ENCODE measurements at regions of chr16 and their contacts with region 1.

Region 1: DNA sequence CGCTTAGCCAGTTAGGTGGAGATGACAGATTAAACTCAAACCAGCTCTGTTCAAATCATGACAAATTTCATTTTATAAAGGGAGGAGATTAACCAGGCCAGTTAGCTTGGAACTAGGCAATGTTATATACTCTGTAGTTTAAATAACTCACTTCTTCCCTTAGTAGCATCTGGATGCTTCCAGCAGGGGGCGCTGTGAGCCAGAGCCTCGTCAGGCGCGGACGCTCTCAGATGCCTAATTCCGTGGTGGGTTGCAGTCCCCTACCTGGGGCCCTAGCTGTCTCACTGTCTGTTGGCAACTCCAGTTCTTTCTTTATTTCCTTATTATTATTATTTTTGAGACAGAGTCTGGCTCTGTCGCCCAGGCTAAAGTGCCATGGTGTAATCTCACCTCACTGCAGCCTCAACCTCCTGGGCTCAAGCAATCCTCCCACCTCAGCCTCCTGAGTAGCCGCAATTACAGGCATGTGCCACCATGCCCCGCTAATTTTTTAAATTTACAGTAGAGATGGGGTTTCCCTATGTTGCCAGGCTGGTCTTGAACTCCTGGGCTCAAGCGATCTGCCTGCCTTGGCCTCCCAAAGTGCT is 17.3 kb upstream of the WFDC1 start:
- DNase-seq: peak; percentile 51
- ATAC-seq: peak; percentile 85
- H3K4me3 ChIP-seq: no peak overlapping the region
- H3K27ac ChIP-seq: no peak overlapping the region
- H3K4me1 ChIP-seq: no peaks in the 10 kb centered on the region
- H3K27me3 ChIP-seq: peaks cover 0 to 46% of the 10 kb centered on the region in 2 experiments; a peak in 3 of 5 replicates
- CTCF ChIP-seq: peak; percentile 89
- EP300 ChIP-seq: no peak
- POLR2A ChIP-seq: no peak
- RAD21 ChIP-seq: peak; percentile 87

Region 2: GRCh38 chr16:84247844-84248243 is 29.5 kb before region 1 on chr16:
- CTCF ChIA-PET with region 1: no interaction called
- POLR2A ChIA-PET with region 1: no interaction called
- in situ Hi-C with region 1: no loop called
- intact Hi-C with region 1: no loop called
- DNase-seq: no peak
- ATAC-seq: no peak
- H3K4me3 ChIP-seq: no peak overlapping the region
- H3K27ac ChIP-seq: no peak overlapping the region
- H3K4me1 ChIP-seq: no peaks in the 10 kb centered on the region
- H3K27me3 ChIP-seq: peaks cover 4 to 52% of the 10 kb centered on the region in 2 experiments
- CTCF ChIP-seq: no peak
- EP300 ChIP-seq: no peak
- POLR2A ChIP-seq: no peak
- RAD21 ChIP-seq: no peak

Region 3: DNA sequence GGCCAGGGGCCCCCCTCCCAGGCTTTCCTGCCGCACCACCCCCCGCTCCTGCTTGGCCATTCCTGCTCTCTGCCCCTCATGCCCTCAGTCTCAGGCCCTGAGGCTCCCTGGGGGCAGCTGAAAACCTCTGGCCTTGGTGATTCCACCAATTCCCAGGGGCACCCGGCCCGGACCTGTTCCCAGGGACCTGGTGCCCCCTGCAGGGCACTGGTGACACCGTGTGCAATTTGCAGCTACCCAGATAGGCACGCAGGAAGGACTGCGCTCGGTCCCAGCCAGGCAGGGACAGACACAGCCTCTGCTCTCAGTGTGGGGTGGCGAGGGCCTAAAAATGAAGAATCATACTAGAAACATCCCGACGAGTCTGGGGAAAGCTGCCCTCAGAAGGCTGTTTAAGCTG is 30.8 kb after region 1 on chr16:
- CTCF ChIA-PET with region 1: interaction called, 11 read pairs
- POLR2A ChIA-PET with region 1: no interaction called
- in situ Hi-C with region 1: no loop called
- intact Hi-C with region 1: loop called (anchors 1 kb)
- DNase-seq: peak; percentile 40
- ATAC-seq: peak; percentile 93
- H3K4me3 ChIP-seq: no peak overlapping the region
- H3K27ac ChIP-seq: no peak overlapping the region
- H3K4me1 ChIP-seq: no peaks in the 10 kb centered on the region
- H3K27me3 ChIP-seq: peaks cover 6 to 48% of the 10 kb centered on the region in 2 experiments
- CTCF ChIP-seq: peak; percentile 88
- EP300 ChIP-seq: no peak
- POLR2A ChIP-seq: no peak
- RAD21 ChIP-seq: peak; percentile 71

Region 4: DNA sequence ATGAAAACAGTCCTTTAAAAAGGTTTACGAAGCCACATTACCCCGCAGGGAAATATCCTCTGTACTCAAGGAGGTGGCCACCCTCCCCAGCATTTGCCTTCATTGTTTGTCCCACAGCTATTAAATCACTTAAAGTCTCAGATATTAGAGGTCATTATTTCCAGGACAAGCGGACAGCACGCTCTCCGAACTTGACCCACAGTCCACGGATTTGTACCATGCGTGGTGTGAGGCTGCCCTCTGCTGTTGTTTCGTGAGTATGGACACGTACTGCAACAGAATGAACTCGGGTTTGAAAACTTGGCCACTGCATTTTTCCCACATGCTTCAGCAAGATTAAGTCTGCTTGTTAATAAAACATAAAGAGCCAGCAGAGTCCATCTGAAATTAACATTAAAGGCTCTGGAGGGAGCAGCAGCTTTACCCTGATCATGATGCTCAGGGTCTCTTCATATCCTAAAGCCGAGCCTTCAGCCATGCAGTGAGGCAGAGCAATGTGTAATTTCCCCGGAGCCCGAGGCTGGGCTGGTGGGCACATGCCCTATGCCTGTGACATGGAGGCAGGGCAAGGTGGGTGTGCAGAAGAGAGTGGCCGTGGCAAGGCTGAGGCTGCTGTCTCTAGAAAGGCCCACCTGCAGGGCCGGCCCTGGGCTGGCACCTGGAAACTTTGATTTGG is 207.4 kb after region 1 on chr16:
- CTCF ChIA-PET with region 1: interaction called, 62 read pairs
- POLR2A ChIA-PET with region 1: no interaction called
- in situ Hi-C with region 1: loop called (anchors 5 kb)
- intact Hi-C with region 1: no loop called
- DNase-seq: peak; percentile 62
- ATAC-seq: peak; percentile 81
- H3K4me3 ChIP-seq: no peak overlapping the region
- H3K27ac ChIP-seq: no peak overlapping the region
- H3K4me1 ChIP-seq: no peaks in the 10 kb centered on the region
- H3K27me3 ChIP-seq: no peaks in the 10 kb centered on the region
- CTCF ChIP-seq: peak; percentile 95
- EP300 ChIP-seq: no peak
- POLR2A ChIP-seq: no peak
- RAD21 ChIP-seq: peak; percentile 97

Measured in HepG2 (cell line).